Activated CD4-positive, alpha-beta memory T cell treated with anti-CD3 and anti-CD28 coated beads for 36 hours (primary cell): ENCODE measurements at regions of chr1 and their contacts with region 1.

Region 1: DNA sequence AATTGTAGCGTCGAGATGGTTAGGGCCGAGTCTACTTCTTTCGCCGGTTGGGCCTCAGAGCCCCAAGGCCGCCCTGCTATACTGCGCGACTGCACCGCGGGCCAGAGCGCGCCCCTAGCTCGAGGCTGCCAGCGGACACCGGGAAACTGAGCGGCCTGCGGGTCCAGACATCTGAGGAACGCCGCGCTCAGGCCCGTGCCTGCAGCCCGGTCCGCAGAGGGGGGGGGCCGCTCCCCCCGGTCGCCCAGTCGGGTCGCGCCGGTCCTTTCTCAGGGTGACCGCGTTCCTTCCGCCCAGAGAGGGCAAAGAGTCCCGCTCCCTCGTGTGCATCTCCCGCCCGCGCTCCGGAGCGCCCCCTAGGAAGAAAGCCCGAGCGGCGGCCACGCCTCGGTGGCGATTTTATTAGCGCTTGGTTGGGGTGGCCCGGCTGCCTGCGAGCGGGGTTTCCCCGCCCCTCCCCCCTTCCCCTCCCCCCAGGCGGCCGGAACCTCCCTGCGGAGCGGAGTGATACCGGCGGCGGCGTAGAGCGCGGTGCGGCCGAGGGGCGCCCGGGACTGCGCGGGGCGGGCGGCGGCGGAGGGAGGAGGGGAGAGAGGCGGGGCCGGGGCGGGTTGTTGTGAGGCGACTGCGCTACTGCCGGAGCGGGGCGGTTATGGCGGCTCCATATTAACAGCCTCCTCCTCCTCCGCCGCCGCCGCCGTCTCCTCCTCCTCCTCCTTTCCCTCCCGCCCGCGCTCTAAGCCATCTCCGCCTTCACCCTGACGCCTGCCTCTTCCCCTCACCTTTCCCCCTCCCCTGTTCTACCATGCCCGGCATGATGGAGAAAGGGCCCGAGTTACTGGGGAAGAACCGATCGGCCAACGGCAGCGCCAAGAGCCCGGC is at the start of gene RCOR3:
- DNase-seq: peak; percentile 95
- H3K4me3 Mint-ChIP-seq: peak within 1 kb of the TSS; percentile 83
- H3K27ac Mint-ChIP-seq: peak within 1 kb of the TSS; percentile 93
- H3K4me1 Mint-ChIP-seq: peaks cover 16% of the 10 kb centered on the region
- H3K27me3 Mint-ChIP-seq: no peaks in the 10 kb centered on the region
- total RNA-seq, gene RCOR3: 30.2 to 32.7 TPM

Region 2: DNA sequence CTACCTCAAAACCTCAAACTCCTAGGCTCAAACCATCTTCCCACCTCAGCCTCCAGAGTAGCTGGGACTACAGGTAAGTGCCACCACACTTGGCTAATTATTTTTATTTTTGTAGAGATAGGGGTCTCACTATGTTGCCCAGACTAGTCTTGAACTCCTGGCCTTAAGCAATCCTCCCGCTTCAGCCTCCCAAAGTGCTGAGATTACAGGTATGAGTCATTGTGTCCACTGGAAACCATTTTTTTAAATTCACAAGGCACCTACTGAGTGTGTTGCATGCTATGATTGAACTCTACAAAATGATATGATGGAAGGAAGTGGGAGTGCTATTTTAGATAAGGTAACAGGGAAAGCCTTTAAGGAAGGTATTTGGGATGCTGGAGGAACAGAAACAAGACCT is 41.6 kb before region 1 on chr1:
- CTCF ChIA-PET with region 1: no interaction called
- POLR2A ChIA-PET with region 1: no interaction called
- intact Hi-C with region 1: no loop called
- DNase-seq: no peak
- H3K4me3 Mint-ChIP-seq: no peak overlapping the region
- H3K27ac Mint-ChIP-seq: no peak overlapping the region
- H3K4me1 Mint-ChIP-seq: no peaks in the 10 kb centered on the region
- H3K27me3 Mint-ChIP-seq: peaks cover 3% of the 10 kb centered on the region

Region 3: GRCh38 chr1:211229365-211229759 is 29.6 kb before region 1 on chr1:
- CTCF ChIA-PET with region 1: interaction called, 5 read pairs
- POLR2A ChIA-PET with region 1: interaction called, 4 read pairs
- intact Hi-C with region 1: loop called (anchors 1 kb)
- DNase-seq: no peak
- H3K4me3 Mint-ChIP-seq: peak overlapping the region; percentile 57
- H3K27ac Mint-ChIP-seq: peak overlapping the region; percentile 69
- H3K4me1 Mint-ChIP-seq: peaks cover 18% of the 10 kb centered on the region
- H3K27me3 Mint-ChIP-seq: no peaks in the 10 kb centered on the region

Region 4: GRCh38 chr1:211305044-211305443 is 46.0 kb after region 1 on chr1:
- CTCF ChIA-PET with region 1: no interaction called
- POLR2A ChIA-PET with region 1: interaction called, 4 read pairs
- intact Hi-C with region 1: loop called (anchors 1 kb)
- DNase-seq: peak; percentile 76
- H3K4me3 Mint-ChIP-seq: no peak overlapping the region
- H3K27ac Mint-ChIP-seq: peak overlapping the region; percentile 77
- H3K4me1 Mint-ChIP-seq: peaks cover 44% of the 10 kb centered on the region
- H3K27me3 Mint-ChIP-seq: no peaks in the 10 kb centered on the region